Lower leg skin (tissue), 4 donors: ENCODE measurements at regions of chr1 and their contacts with region 1.

Region 1: GRCh38 chr1:216194721-216195120 is 228.5 kb downstream of the USH2A start:
- DNase-seq: no peak
- H3K4me3 ChIP-seq: no peak overlapping the region
- CTCF ChIP-seq: no peak
- POLR2A ChIP-seq: no peak

Region 2: DNA sequence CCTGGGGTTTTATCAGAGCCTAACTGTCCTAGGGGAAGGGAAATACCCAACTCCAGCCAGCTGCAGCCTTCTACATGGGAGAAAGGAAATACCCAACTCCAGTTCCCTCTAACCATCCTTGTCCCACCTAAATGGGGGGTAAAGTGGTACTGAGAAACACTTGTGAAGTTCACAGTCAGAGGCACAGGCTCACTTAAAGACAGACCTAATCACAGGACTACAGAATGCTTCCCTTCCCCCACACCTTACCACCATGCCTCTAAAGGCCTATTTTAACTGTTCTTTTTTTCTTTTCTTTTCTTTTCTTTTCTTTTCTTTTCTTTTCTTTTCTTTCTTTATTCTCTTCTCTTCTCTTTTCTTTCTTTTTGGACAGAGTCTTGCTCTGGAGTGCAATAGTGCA is 1761.0 kb after region 1 on chr1:
- intact Hi-C with region 1: loop called (anchors 5 kb)
- DNase-seq: no peak
- H3K4me3 ChIP-seq: no peak overlapping the region
- CTCF ChIP-seq: no peak
- POLR2A ChIP-seq: no peak